Activated naive CD4-positive, alpha-beta T cell treated with anti-CD3 and anti-CD28 coated beads for 36 hours (primary cell): ENCODE measurements at regions of chr5 and their contacts with region 1.

Region 1: GRCh38 chr5:138128334-138128733 is 10.9 kb downstream of the NME5 start:
- DNase-seq: no peak
- H3K4me3 Mint-ChIP-seq: no peak overlapping the region
- H3K27ac Mint-ChIP-seq: no peak overlapping the region
- H3K4me1 Mint-ChIP-seq: peaks cover 2% of the 10 kb centered on the region
- H3K27me3 Mint-ChIP-seq: no peaks in the 10 kb centered on the region

Region 2: DNA sequence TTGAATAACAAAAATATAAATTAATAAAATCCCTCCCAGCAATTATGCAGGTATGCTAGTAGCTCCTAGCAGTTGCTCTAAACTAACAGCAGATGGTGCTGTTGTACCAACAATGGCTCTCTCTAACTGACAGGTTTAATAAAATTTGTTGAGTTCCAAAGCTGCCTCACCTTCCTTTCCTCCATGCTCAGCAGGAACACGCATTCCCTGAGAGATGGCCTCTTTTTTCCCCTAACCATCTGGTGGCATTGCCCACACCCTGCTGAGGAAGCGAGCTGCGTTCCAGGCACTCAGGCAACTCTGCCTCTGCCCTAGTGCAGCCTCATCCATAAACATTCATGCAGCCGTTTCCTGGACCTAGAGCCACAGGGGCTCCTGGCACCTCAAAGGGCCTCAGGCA is 498.7 kb before region 1 on chr5:
- CTCF ChIA-PET with region 1: interaction called, 4 read pairs
- intact Hi-C with region 1: loop called (anchors 2 kb)
- DNase-seq: peak; percentile 35
- H3K4me3 Mint-ChIP-seq: no peak overlapping the region
- H3K27ac Mint-ChIP-seq: no peak overlapping the region
- H3K4me1 Mint-ChIP-seq: no peaks in the 10 kb centered on the region
- H3K27me3 Mint-ChIP-seq: no peaks in the 10 kb centered on the region

Region 3: GRCh38 chr5:137778772-137779564 is 349.4 kb before region 1 on chr5:
- CTCF ChIA-PET with region 1: interaction called, 16 read pairs
- intact Hi-C with region 1: loop called (anchors 1 kb)
- DNase-seq: no peak
- H3K4me3 Mint-ChIP-seq: no peak overlapping the region
- H3K27ac Mint-ChIP-seq: no peak overlapping the region
- H3K4me1 Mint-ChIP-seq: no peaks in the 10 kb centered on the region
- H3K27me3 Mint-ChIP-seq: no peaks in the 10 kb centered on the region

Region 4: DNA sequence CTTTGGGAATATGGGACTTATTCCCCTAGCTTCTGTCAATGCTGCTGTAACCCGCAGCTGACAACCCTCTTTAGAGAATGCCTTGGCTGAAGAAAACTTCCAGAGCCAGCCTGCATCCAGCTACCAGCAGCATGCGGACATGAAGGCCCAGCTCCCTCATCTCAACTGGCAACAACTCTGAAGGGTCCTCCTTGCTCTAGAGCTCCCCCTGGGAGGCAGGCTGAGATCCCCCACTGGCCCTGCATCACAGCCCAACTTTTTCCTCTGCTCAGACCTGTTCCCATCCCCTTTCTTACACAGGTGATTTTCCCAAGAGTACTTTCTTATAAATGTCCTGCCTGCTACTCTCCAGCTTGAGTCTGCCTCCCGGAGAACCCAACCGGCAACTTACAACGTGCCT is 63.2 kb before region 1 on chr5:
- CTCF ChIA-PET with region 1: interaction called, 14 read pairs
- intact Hi-C with region 1: no loop called
- DNase-seq: peak; percentile 14
- H3K4me3 Mint-ChIP-seq: no peak overlapping the region
- H3K27ac Mint-ChIP-seq: no peak overlapping the region
- H3K4me1 Mint-ChIP-seq: peaks cover 4% of the 10 kb centered on the region
- H3K27me3 Mint-ChIP-seq: no peaks in the 10 kb centered on the region

Region 5: DNA sequence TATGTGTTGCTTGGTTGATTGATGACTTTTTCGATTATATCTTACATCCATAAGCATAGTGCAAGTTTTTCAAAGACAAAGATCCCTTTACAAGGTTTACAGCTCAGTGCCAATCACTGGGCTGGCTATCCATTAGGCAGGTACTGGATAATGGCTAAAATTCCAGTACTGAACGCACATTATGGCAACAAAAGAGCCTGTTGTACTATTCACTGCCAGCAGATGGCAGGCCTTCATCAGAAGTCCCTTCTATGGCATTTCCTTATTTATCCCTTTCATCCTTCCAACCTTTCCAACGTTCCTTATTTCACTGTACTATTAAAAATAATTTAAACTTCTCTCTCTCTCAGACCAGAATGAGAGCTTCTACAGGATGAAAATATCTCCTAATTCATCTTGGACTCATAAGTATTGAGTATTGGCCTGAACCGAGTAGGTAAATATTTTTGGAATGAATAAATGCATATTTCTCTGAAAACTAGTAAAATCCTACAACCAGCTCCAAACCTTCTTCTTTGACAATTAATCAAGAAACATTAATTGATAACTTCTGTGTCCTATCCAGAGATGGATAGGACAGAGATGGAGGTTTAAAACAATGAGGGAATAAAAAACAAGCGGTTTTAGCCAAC is 51.2 kb before region 1 on chr5:
- CTCF ChIA-PET with region 1: interaction called, 78 read pairs
- intact Hi-C with region 1: loop called (anchors 1 kb)
- DNase-seq: peak; percentile 77
- H3K4me3 Mint-ChIP-seq: no peak overlapping the region
- H3K27ac Mint-ChIP-seq: no peak overlapping the region
- H3K4me1 Mint-ChIP-seq: peaks cover 14% of the 10 kb centered on the region
- H3K27me3 Mint-ChIP-seq: no peaks in the 10 kb centered on the region

Region 6: GRCh38 chr5:138138949-138139780 is 10.8 kb after region 1 on chr5 and contains the start of gene NME5:
- CTCF ChIA-PET with region 1: interaction called, 11 read pairs
- intact Hi-C with region 1: no loop called
- DNase-seq: peak; percentile 7
- H3K4me3 Mint-ChIP-seq: no peak within 1 kb of the TSS
- H3K27ac Mint-ChIP-seq: no peak within 1 kb of the TSS
- H3K4me1 Mint-ChIP-seq: peaks cover 4% of the 10 kb centered on the region
- H3K27me3 Mint-ChIP-seq: peaks cover 13% of the 10 kb centered on the region
- total RNA-seq, gene NME5: not detected